ENCODE measurements at regions of chr12 and their contacts with region 1.

Region 1: DNA sequence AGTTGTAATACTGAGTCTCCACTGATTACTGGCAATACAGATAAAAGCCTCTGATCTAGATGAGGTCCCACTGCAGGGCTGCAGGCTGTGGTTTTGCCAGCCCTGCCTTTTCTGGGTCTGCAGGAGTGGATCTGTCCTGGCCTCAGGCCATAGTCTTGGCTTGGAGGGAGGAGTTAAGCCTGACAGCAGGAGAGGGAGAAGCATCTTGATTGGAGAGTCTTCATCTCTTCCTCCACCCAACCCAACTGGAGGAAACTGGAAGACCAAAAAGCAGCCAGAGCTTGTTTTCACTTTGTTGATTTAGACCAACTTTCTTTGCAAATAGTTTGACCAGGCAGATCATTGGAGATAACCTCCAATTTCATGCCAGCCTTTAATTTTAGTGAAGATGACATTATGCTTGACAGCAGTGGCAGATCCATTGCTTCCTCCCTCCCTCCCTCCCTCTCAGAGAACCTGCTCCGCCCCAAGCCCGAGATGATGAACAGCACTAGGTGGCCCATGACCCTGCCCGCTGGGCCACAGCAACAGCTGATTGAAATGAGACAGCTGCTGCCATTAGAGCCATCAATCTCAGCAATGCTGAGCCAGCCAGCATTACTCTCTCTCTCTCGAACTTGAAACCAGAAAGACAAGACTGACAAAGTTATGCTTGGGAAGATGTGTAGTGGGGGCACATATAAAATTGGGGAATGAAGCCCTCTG is 222.4 kb downstream of the GLT1D1 start:
- DNase-seq: no peak
- H3K4me3 ChIP-seq: no peak overlapping the region
- H3K27ac ChIP-seq: no peak overlapping the region
- H3K4me1 ChIP-seq: no peaks in the 10 kb centered on the region
- H3K27me3 ChIP-seq: no peaks in the 10 kb centered on the region
- CTCF ChIP-seq: no peak

Region 2: GRCh38 chr12:128994854-128995253 is 80.8 kb before region 1 on chr12:
- CTCF ChIA-PET with region 1: no interaction called
- dilution Hi-C with region 1: loop called (anchors 5 kb)
- in situ Hi-C with region 1: no loop called
- intact Hi-C with region 1: no loop called
- DNase-seq: no peak
- H3K4me3 ChIP-seq: no peak overlapping the region
- H3K27ac ChIP-seq: no peak overlapping the region
- H3K4me1 ChIP-seq: no peaks in the 10 kb centered on the region
- H3K27me3 ChIP-seq: no peaks in the 10 kb centered on the region
- CTCF ChIP-seq: no peak